AG04449 (cell line): ENCODE measurements at regions of chr1 and their contacts with region 1.

Region 1: DNA sequence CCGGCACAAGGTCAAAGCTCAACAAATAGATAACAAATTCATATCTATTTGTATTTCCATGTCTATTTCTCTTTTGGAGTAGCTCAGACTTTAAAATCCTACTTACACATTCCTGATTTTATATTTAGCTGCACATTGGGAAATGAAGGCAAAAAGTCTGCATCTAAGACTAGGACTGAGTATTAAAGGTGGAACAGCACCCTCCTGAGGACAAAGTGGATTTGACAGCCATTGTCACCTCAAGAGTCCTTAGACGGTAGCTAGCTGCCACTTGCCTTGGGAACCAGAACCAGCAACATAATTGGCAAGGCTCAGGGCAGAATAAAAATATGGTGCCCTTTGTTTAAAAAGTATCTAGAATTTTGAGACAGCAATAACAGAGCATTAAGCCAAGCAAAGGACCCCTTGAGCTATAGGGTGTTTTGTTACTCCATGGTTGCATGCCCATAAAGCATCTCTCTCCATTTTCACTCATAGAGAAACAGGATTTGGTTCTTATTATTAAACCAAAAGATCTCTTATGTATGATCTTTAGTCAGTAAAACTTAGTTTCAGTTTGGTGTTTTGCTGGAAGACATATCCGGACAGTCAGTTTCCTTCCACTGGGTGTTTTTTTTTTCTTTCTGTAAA is 30.0 kb upstream of the SGIP1 start:
- DNase-seq: no peak
- H3K4me3 ChIP-seq: no peak overlapping the region
- CTCF ChIP-seq: peak; percentile 65

Region 2: GRCh38 chr1:66262211-66262963 is 241.6 kb before region 1 on chr1:
- CTCF ChIA-PET with region 1: interaction called, 124 read pairs
- POLR2A ChIA-PET with region 1: no interaction called
- DNase-seq: peak; percentile 83
- H3K4me3 ChIP-seq: no peak overlapping the region
- CTCF ChIP-seq: no peak

Region 3: DNA sequence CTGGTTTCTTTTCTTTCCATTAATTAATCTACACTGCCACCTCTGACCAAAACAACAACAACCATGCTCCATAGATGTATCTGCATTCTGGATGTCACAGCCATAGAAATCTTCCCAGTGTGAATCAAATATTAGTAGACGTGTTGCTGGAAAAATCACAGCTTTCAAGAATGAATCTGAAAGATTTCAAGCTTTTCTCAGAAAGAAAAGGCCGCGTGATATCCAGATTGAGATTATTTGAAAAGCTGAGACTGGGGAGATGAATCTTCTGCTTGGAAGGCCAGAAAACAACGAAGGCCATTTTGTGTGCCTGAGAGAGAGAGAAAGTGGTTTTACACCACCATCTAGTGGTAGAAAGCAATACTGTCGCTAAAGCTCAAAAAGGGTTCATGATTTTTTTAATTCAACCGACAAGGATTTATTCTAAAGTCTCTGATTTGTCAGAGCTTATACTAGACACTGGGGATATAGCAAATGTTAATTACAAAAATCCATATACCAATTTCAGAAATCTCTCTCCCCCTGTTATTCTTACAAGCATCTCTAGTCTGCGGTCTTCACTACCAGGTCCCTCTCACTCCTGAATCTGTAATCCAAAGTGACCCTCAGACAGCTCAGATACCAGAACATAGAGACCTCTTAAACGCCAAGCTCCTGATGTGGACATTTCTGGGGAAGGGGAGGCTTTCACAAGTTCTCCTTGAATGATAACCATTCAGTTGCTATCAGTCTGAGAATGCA is 57.5 kb before region 1 on chr1:
- CTCF ChIA-PET with region 1: interaction called, 144 read pairs
- POLR2A ChIA-PET with region 1: no interaction called
- DNase-seq: peak; percentile 26
- H3K4me3 ChIP-seq: no peak overlapping the region
- CTCF ChIP-seq: peak; percentile 60

Region 4: DNA sequence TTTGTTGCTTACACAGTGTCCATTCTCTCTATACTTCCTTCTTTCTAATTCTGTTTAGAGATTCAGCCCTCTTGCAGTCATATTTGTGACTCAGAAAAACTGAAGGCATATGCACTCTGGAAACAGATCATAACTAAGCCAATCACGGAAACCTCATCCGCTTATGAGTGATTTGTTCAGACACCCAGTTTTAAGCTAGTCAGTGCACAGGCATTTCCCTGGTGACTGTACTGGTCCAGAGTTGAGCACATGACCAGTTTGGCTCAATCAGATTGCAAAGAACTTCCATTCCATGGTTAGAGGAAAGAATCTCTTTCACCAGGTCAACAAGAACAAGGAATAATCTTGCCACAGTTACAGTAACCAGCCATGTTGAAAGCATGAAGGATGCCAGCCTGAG is 39.2 kb before region 1 on chr1:
- CTCF ChIA-PET with region 1: interaction called, 24 read pairs
- POLR2A ChIA-PET with region 1: no interaction called
- DNase-seq: peak; percentile 98
- H3K4me3 ChIP-seq: no peak overlapping the region
- CTCF ChIP-seq: no peak

Region 5: DNA sequence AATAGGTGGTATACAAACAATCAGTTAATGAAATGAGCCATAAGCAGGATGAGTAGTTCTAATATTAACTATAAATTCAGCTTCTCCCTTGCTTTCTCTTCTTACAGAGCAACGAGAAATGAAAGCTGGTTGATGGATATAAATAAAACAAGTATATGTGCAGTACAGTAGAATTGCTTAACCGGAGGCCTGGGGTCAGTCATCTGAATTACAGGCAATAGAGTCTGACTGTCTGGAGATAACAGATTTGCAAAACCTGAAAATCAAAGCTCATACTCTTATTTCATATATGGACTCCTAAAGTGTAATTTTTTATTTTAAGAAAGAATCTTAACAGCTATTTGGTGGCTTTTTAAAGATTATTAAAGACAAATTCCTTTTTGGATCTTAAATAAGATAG is 13.1 kb before region 1 on chr1:
- CTCF ChIA-PET with region 1: interaction called, 48 read pairs
- POLR2A ChIA-PET with region 1: no interaction called
- DNase-seq: no peak
- H3K4me3 ChIP-seq: no peak overlapping the region
- CTCF ChIP-seq: no peak

Region 6: GRCh38 chr1:66533804-66534740 is 30.1 kb after region 1 on chr1 and contains the start of gene SGIP1:
- CTCF ChIA-PET with region 1: interaction called, 43 read pairs
- POLR2A ChIA-PET with region 1: interaction called, 3 read pairs
- DNase-seq: peak; percentile 38
- H3K4me3 ChIP-seq: peak within 1 kb of the TSS; percentile 65
- CTCF ChIP-seq: no peak

Region 7: DNA sequence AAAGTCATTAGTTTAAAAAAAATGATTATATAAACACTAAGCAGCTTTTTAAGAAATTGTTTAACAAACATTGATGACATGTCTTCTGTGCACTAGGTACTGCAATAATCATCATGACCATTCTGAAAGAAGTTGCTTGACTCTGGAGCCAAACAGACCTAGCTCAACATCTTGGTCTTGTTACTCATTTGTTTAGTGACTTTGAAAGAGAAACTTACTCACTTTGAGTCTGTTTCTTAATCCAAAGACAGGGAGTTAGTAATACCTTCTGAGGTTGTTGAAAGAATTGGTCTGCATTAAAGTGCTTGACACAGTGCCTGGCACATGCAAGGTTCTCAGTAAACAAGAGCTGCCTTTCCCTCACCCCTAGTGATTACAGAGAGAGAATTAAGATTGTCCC is 114.4 kb after region 1 on chr1:
- CTCF ChIA-PET with region 1: no interaction called
- POLR2A ChIA-PET with region 1: no interaction called
- DNase-seq: no peak
- H3K4me3 ChIP-seq: no peak overlapping the region
- CTCF ChIP-seq: no peak